AG04450 (cell line): ENCODE measurements at regions of chr14 and their contacts with region 1.

Region 1: GRCh38 chr14:73568381-73568781 is 632 bp upstream of the ACOT2 start:
- DNase-seq: no peak
- H3K4me3 ChIP-seq: peak overlapping the region; percentile 75
- H3K27ac ChIP-seq: peak overlapping the region; percentile 88
- H3K27me3 ChIP-seq: no peaks in the 10 kb centered on the region
- CTCF ChIP-seq: no peak

Region 2: DNA sequence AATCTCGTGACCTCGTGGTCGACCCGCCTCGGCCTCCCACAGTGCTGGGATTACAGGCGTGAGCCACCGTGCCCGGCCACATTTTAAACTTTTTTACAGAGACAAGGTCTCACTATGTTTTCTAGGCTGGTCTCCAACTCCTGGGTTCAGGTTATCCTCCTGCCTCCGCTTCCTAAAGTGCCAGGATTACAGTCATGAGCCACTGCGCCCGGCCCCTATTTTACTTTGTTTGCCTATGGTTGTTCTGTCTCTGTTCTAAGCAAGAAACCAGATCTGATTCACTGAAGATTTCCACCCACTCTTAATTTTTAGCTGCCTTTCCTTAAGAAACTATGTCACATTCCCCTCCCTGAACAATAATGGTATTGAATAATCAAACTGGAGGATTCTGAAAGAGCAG is 471.0 kb before region 1 on chr14:
- CTCF ChIA-PET with region 1: no interaction called
- POLR2A ChIA-PET with region 1: no interaction called
- DNase-seq: no peak
- H3K4me3 ChIP-seq: no peak overlapping the region
- H3K27ac ChIP-seq: no peak overlapping the region
- H3K27me3 ChIP-seq: no peaks in the 10 kb centered on the region
- CTCF ChIP-seq: no peak

Region 3: GRCh38 chr14:73491256-73492042 is 76.9 kb before region 1 on chr14:
- CTCF ChIA-PET with region 1: no interaction called
- POLR2A ChIA-PET with region 1: interaction called, 10 read pairs
- DNase-seq: peak; percentile 8
- H3K4me3 ChIP-seq: peak overlapping the region; percentile 73
- H3K27ac ChIP-seq: peak overlapping the region; percentile 31
- H3K27me3 ChIP-seq: peaks cover 4% of the 10 kb centered on the region
- CTCF ChIP-seq: no peak

Region 4: DNA sequence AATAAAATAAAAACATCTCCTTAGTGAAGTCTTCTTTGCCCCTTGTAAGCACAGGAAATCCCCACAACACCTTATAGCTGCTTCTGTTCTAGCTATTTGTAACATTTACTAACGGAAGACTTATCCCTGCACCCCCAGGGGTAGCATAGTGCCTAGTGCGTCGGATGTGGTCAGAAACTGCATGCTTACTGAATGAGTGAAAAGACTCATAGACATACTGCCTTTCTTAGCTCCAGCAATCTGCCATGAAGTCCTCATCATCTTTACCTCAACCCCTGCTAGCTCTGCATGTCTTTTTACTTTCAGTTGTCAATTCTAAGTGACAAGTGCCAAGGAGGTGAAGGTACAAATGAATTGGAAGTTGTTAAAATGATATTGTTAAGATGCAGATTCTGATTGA is 64.7 kb before region 1 on chr14:
- CTCF ChIA-PET with region 1: interaction called, 15 read pairs
- POLR2A ChIA-PET with region 1: interaction called, 4 read pairs
- DNase-seq: peak; percentile 10
- H3K4me3 ChIP-seq: no peak overlapping the region
- H3K27ac ChIP-seq: no peak overlapping the region
- H3K27me3 ChIP-seq: no peaks in the 10 kb centered on the region
- CTCF ChIP-seq: no peak

Region 5: GRCh38 chr14:73613046-73613383 is 44.6 kb after region 1 on chr14:
- CTCF ChIA-PET with region 1: no interaction called
- POLR2A ChIA-PET with region 1: interaction called, 11 read pairs
- DNase-seq: no peak
- H3K4me3 ChIP-seq: peak overlapping the region; percentile 66
- H3K27ac ChIP-seq: no peak overlapping the region
- H3K27me3 ChIP-seq: no peaks in the 10 kb centered on the region
- CTCF ChIP-seq: no peak